CD4-positive, alpha-beta T cell (primary cell): ENCODE measurements at regions of chr14 and their contacts with region 1.

Region 1: DNA sequence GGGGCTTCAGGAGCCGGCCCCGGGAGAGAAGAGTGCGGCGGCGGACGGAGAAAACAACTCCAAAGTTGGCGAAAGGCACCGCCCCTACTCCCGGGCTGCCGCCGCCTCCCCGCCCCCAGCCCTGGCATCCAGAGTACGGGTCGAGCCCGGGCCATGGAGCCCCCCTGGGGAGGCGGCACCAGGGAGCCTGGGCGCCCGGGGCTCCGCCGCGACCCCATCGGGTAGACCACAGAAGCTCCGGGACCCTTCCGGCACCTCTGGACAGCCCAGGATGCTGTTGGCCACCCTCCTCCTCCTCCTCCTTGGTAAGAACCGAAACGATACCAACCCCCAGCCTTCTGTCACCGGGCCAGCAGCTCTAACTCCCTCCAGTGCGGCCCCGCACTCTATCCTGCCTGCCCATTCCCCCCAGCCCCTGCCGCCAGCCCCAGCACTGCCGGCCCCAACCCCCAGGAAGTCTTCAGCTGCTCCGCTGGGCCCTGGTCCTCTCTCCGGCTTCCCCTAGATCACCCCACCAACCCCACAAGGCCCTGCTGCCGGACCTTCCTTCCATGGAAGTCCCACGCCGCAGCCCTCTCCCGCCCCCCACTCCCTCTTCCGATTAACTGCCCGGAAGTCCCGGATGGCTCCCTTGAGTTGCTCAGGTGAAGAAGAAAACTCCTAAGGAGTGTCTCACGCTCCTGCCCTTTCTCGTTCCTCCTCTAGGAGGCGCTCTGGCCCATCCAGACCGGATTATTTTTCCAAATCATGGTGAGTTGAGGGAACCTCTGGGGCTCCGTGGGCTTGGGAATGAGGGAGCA is 693 bp downstream of the LRP10 start:
- DNase-seq: peak; percentile 51 to 84 (median 68)
- ATAC-seq: peak; percentile 35
- H3K4me3 ChIP-seq: peak overlapping the region; percentile 94
- H3K4me3 Mint-ChIP-seq: peak overlapping the region; percentile 93
- H3K27ac ChIP-seq: peak overlapping the region; percentile 93 to 98
- H3K27ac Mint-ChIP-seq: peak overlapping the region; percentile 87
- H3K4me1 ChIP-seq: peaks cover 62% of the 10 kb centered on the region
- H3K4me1 Mint-ChIP-seq: peaks cover 39% of the 10 kb centered on the region
- H3K27me3 ChIP-seq: no peaks in the 10 kb centered on the region
- H3K27me3 Mint-ChIP-seq: no peaks in the 10 kb centered on the region
- CTCF ChIP-seq: peak; percentile 93

Region 2: DNA sequence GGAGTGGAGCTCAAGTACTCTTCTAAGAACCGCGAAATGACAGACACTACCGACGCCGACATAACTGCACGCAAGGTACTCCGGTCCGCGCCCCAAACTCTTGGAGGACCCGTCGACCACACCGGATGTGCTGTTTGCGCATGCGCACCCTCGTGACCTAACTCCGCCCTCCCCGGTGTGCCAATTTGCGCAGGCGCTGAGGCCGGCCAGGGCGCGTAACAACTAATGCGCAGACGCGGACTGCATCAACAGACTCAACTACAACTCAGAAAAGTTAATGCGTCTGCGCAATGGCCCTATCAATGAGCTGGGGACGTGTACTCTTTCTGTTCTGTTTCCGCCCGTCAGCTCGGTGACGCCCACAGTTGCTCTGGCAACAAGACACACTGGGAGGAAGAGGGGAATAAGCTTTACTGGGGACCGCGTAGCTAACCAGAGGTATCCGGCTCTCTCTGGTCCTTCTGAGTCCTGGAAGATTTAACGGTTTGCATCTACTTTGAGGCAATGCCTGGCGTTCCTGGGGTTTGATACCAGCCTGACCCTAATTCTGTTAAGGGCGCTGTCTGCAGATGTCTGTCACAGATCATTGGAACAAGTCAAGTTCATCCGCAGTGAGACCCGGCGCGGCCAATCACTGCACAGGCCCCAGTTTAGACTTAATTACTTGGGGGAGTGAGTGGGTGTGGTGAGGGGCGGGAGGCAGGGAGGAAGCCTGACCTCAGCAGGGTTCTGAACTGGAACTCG is 283.0 kb before region 1 on chr14 and contains the start of gene DAD1:
- CTCF ChIA-PET with region 1: interaction called, 5 read pairs
- POLR2A ChIA-PET with region 1: interaction called, 11 read pairs
- intact Hi-C with region 1: no loop called
- DNase-seq: peak; percentile 98 to 100 (median 100)
- ATAC-seq: peak; percentile 87
- H3K4me3 ChIP-seq: peak within 1 kb of the TSS; percentile 82
- H3K4me3 Mint-ChIP-seq: peak within 1 kb of the TSS; percentile 96
- H3K27ac ChIP-seq: peak within 1 kb of the TSS; percentile 92 to 96
- H3K27ac Mint-ChIP-seq: peak within 1 kb of the TSS; percentile 98
- H3K4me1 ChIP-seq: peaks cover 39% of the 10 kb centered on the region
- H3K4me1 Mint-ChIP-seq: peaks cover 60% of the 10 kb centered on the region
- H3K27me3 ChIP-seq: no peaks in the 10 kb centered on the region
- H3K27me3 Mint-ChIP-seq: no peaks in the 10 kb centered on the region
- CTCF ChIP-seq: no peak
- total RNA-seq, gene DAD1: 41.8 to 44.1 TPM

Region 3: DNA sequence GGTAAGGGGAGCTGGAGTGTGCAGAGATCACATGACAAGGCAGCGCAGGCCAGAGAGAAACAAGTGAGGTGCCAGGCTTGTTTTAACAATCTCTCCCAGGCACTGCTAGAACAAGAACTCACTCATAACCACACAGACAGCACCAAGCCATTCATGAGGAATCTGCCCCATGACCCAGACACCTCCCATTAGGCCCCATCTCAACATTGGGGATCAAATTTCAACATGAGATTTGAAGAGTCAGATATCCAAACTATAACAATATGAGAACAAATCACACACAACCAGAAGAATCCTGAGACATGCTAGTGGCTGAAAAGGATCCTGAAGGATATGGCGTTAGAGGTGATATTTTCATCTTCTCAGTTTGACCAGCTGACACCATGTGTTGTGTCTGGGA is 250.0 kb before region 1 on chr14:
- CTCF ChIA-PET with region 1: no interaction called
- POLR2A ChIA-PET with region 1: no interaction called
- intact Hi-C with region 1: no loop called
- DNase-seq: no peak
- ATAC-seq: no peak
- H3K4me3 ChIP-seq: no peak overlapping the region
- H3K4me3 Mint-ChIP-seq: no peak overlapping the region
- H3K27ac ChIP-seq: no peak overlapping the region
- H3K27ac Mint-ChIP-seq: no peak overlapping the region
- H3K4me1 ChIP-seq: no peaks in the 10 kb centered on the region
- H3K4me1 Mint-ChIP-seq: no peaks in the 10 kb centered on the region
- H3K27me3 ChIP-seq: no peaks in the 10 kb centered on the region
- H3K27me3 Mint-ChIP-seq: peaks cover 5% of the 10 kb centered on the region
- CTCF ChIP-seq: no peak

Region 4: GRCh38 chr14:22822571-22823098 is 49.6 kb before region 1 on chr14:
- CTCF ChIA-PET with region 1: interaction called, 6 read pairs
- POLR2A ChIA-PET with region 1: interaction called, 14 read pairs
- intact Hi-C with region 1: no loop called
- DNase-seq: peak; percentile 46 to 85 (median 64)
- ATAC-seq: peak; percentile 84
- H3K4me3 ChIP-seq: peak overlapping the region; percentile 44
- H3K4me3 Mint-ChIP-seq: peak overlapping the region; percentile 2
- H3K27ac ChIP-seq: no peak overlapping the region
- H3K27ac Mint-ChIP-seq: no peak overlapping the region
- H3K4me1 ChIP-seq: peaks cover 18% of the 10 kb centered on the region
- H3K4me1 Mint-ChIP-seq: peaks cover 23% of the 10 kb centered on the region
- H3K27me3 ChIP-seq: peaks cover 0 to 5% of the 10 kb centered on the region in 2 experiments
- H3K27me3 Mint-ChIP-seq: peaks cover 10% of the 10 kb centered on the region
- CTCF ChIP-seq: peak; percentile 83

Region 5: DNA sequence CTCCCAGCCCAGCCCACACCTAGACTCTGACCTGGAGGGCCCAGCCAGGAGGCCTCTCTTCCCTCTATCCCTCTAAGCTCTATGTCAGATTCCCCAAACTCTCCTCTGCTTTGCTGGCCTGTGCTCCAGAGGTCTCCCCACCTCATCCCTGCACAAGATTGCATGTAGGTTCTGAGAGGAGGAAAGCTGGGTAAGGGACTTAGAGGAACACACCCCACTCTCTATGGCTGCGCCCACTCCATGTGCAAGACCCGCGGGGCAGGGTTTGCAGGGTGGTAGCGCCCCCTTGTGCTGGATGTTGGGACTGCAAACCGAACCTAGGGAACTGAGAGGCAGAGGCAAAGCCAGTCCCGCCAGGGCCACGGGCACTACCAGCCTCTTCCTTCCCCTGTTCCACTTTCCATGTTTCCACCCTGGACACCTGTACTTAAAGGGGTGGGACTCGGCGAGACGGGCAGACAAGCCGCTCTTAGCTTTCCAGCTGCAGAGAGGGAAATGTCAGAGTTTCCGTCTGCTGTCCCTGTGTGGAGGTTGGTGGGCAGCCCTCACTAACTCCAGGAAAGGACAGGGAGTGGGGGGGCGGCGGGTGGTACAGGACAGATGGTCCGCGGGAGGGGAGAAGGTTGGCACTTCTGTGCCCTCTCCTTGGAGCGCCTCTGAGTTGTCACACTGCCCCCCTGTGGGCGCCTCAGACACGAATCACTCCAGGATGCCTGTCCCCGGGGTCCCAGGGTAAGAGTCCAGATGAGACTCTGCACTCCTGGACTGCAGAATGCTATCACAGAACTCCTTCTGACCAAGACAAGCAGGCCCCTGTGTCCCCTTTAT is 19.1 kb before region 1 on chr14:
- CTCF ChIA-PET with region 1: interaction called, 7 read pairs
- POLR2A ChIA-PET with region 1: interaction called, 12 read pairs
- intact Hi-C with region 1: loop called in 1 of 2 experiments (anchors 2 kb)
- DNase-seq: peak; percentile 81 to 96 (median 90)
- ATAC-seq: peak; percentile 91
- H3K4me3 ChIP-seq: peak overlapping the region; percentile 69
- H3K4me3 Mint-ChIP-seq: peak overlapping the region; percentile 83
- H3K27ac ChIP-seq: no peak overlapping the region
- H3K27ac Mint-ChIP-seq: peak overlapping the region; percentile 61
- H3K4me1 ChIP-seq: peaks cover 18% of the 10 kb centered on the region
- H3K4me1 Mint-ChIP-seq: peaks cover 27% of the 10 kb centered on the region
- H3K27me3 ChIP-seq: no peaks in the 10 kb centered on the region
- H3K27me3 Mint-ChIP-seq: peaks cover 5% of the 10 kb centered on the region
- CTCF ChIP-seq: peak; percentile 99

Region 6: DNA sequence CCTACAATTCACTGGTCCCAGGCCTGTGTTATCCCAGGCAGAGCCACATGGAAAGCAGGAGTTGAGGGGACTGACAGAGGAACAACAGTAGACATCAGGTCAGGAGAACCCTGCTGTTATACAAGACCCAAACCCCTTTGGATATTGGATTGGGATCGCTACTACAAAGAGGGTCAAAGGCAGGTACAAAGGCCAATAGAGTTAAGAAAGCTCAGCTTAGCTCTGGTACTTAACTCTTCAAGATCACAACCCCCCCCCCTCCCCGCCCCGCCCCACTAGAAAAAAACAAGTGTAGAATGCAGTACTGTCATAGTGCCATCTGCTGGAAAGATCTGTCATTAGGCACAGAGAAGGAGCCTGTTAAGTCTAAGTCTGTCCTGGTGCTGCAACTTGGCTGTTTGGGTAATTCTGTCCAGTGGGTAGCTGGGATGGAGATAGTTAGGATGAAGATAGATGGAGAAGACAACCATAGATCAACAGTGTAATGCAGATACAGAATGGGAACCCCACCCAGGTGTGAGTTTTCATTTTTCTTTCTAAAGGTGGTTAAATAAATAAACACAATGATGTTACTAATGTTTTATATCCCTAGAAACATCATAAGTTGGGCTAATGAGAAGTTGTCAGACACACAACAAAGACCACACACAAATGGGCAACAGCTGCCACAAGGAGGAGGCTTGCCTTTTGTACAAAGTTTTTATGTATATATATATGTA is 28.0 kb after region 1 on chr14:
- CTCF ChIA-PET with region 1: interaction called, 23 read pairs
- POLR2A ChIA-PET with region 1: interaction called, 9 read pairs
- intact Hi-C with region 1: loop called (anchors 1 kb)
- DNase-seq: peak in 13 of 14 experiments; percentile 14 to 87 (median 36)
- ATAC-seq: peak; percentile 92
- H3K4me3 ChIP-seq: no peak overlapping the region
- H3K4me3 Mint-ChIP-seq: no peak overlapping the region
- H3K27ac ChIP-seq: no peak overlapping the region
- H3K27ac Mint-ChIP-seq: no peak overlapping the region
- H3K4me1 ChIP-seq: peaks cover 13% of the 10 kb centered on the region
- H3K4me1 Mint-ChIP-seq: peaks cover 15% of the 10 kb centered on the region
- H3K27me3 ChIP-seq: no peaks in the 10 kb centered on the region
- H3K27me3 Mint-ChIP-seq: no peaks in the 10 kb centered on the region
- CTCF ChIP-seq: peak; percentile 68

Region 7: GRCh38 chr14:22929104-22929847 is 57.0 kb after region 1 on chr14 and contains the start of gene PRMT5:
- CTCF ChIA-PET with region 1: interaction called, 5 read pairs
- POLR2A ChIA-PET with region 1: interaction called, 8 read pairs
- intact Hi-C with region 1: loop called in 1 of 2 experiments (anchors 2 kb)
- DNase-seq: peak; percentile 93 to 100 (median 97)
- ATAC-seq: peak; percentile 96
- H3K4me3 ChIP-seq: peak within 1 kb of the TSS; percentile 91
- H3K4me3 Mint-ChIP-seq: no peak within 1 kb of the TSS
- H3K27ac ChIP-seq: peak within 1 kb of the TSS; percentile 79 to 88
- H3K27ac Mint-ChIP-seq: no peak within 1 kb of the TSS
- H3K4me1 ChIP-seq: peaks cover 30% of the 10 kb centered on the region
- H3K4me1 Mint-ChIP-seq: peaks cover 11% of the 10 kb centered on the region
- H3K27me3 ChIP-seq: no peaks in the 10 kb centered on the region
- H3K27me3 Mint-ChIP-seq: no peaks in the 10 kb centered on the region
- CTCF ChIP-seq: no peak
- total RNA-seq, gene PRMT5: 15.6 to 19.3 TPM

Region 8: DNA sequence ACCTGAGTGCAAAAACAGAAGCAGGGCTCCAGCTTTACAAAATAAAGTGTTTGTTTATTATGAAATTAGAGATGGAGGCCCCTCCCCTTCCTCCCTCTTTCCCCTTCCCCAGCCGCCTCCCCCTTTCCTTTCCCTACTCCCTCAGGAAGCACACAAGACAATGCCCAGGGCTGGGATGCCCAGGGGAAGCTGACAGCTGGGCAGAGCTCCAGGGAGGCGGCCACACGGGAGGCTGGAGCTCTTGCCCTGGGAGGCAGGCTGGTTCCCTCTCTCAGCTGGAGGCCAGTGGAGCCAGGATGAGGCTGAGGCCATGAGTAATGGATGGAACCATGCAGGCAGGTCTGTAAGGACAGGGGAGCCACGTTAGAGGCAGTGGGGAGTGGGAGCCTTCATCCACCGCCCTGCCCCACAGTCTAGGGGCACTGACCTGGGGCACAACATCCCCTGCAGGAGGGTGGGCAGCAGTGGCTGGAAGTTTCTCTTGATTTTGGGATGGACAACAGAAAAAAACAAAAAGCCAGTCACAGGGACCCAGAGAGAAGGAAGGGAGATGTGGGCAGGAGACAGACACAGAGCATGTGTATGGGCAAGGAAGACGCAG is 174.9 kb after region 1 on chr14:
- CTCF ChIA-PET with region 1: no interaction called
- POLR2A ChIA-PET with region 1: no interaction called
- intact Hi-C with region 1: no loop called
- DNase-seq: no peak
- ATAC-seq: no peak
- H3K4me3 ChIP-seq: no peak overlapping the region
- H3K4me3 Mint-ChIP-seq: no peak overlapping the region
- H3K27ac ChIP-seq: no peak overlapping the region
- H3K27ac Mint-ChIP-seq: no peak overlapping the region
- H3K4me1 ChIP-seq: no peaks in the 10 kb centered on the region
- H3K4me1 Mint-ChIP-seq: no peaks in the 10 kb centered on the region
- H3K27me3 ChIP-seq: no peaks in the 10 kb centered on the region
- H3K27me3 Mint-ChIP-seq: no peaks in the 10 kb centered on the region
- CTCF ChIP-seq: no peak